Spleen (tissue), 13 donors: ENCODE measurements at regions of chr12 and their contacts with region 1.

Region 1: DNA sequence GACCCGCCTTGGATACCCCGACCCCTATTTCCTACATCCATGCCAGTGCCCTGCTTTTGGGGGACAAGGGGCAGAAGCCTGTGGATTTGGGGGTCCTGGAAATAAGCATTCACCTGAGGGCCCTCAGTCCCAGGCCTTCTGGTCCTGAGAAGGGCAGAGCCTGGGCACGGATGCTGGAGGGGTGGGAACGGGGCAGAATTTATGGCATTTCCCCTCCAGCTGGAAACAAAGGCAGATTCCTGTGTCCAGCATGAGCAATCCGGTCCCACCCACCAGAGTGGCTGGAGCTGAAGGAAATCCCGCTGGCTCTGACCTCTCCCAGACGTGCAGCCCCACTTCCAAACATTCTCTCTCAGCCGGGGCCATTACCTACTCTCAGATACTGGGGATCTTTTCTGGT is 9.3 kb downstream of the ANKRD33 start:
- DNase-seq: peak; percentile 66
- H3K4me3 ChIP-seq: no peak overlapping the region
- H3K27ac ChIP-seq: peak overlapping the region in 6 of 8 donors; percentile 4 to 65 (median 33)
- H3K4me1 ChIP-seq: peaks cover 0 to 49% (median 22%) of the 10 kb centered on the region in 6 donors
- H3K27me3 ChIP-seq: peaks cover 0 to 4% (median 0%) of the 10 kb centered on the region in 7 donors
- CTCF ChIP-seq: no peak
- POLR2A ChIP-seq: no peak

Region 2: GRCh38 chr12:51863933-51864832 is 33.0 kb before region 1 on chr12:
- intact Hi-C with region 1: no loop called
- DNase-seq: peak; percentile 69
- H3K4me3 ChIP-seq: peak overlapping the region; percentile 5 to 61 (median 18)
- H3K27ac ChIP-seq: no peak overlapping the region
- H3K4me1 ChIP-seq: peaks cover 12 to 33% (median 25%) of the 10 kb centered on the region in 6 donors
- H3K27me3 ChIP-seq: peaks cover 0 to 62% (median 23%) of the 10 kb centered on the region in 7 donors
- CTCF ChIP-seq: no peak
- POLR2A ChIP-seq: no peak

Region 3: DNA sequence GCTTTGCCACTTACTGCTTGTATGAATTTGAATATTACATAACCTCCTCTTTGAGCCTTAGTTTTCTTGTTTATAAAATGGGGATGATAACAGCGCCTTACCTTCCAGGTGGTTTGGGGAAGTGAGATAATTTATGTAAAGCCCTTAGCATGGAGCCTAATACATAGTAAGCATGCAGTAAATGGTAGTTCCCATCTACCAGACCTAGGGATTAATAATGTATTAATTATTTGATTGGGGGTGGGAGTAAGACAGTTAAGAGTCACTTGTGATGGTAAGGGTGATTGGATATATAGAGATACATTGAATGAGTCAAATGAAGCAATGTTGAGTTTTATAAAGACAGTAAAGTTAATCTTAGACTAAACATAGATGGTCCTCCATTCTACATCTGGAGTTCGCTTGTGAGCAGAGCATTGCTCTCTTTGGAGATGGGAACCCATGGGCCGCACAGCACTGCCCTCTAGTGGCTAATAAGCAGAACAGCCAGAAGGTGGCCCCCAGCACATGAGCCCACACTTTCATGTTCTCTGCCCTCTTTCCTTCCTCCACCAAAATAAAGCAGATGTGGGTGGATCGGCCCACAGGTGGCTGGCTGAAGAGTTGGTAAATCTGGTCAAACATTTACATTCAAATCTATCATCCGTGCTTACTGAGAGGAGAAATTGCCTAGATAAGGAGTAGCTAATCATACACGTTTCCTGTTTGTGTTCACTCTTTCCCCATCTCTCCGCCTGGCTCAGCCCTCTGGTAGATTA is 83.0 kb after region 1 on chr12:
- intact Hi-C with region 1: loop called (anchors 2 kb)
- DNase-seq: peak; percentile 92
- H3K4me3 ChIP-seq: no peak overlapping the region
- H3K27ac ChIP-seq: peak overlapping the region in 3 of 8 donors; percentile 12 to 55 (median 22)
- H3K4me1 ChIP-seq: peaks cover 5 to 50% (median 25%) of the 10 kb centered on the region in 6 donors
- H3K27me3 ChIP-seq: no peaks in the 10 kb centered on the region
- CTCF ChIP-seq: peak; percentile 92 to 99 (median 97)
- POLR2A ChIP-seq: no peak

Region 4: DNA sequence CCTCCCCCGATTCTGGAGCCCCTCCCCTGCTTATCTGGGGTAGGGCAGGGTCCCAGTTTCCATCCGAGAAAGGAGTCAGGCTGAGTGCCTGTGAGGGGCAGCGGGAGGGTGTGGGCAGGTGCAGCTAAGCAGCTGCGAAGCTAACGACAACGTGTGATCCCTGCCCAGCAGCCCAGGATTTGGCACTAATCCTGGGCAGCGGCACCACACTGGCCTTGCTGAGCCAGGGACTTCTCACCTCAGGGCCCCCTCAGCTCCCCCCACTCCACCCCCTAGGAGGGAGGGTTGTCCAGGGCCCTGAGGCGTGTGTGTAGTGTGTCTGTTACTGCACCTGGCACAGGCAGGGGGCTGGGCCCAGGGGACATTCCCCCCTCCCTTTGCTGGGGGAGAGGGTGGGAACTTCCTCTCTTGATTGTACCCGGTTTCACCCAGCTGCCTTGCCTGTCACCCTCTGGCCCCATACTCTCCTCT is 184.1 kb after region 1 on chr12:
- intact Hi-C with region 1: no loop called
- DNase-seq: peak; percentile 91
- H3K4me3 ChIP-seq: peak overlapping the region in 4 of 8 donors; percentile 6 to 58 (median 25)
- H3K27ac ChIP-seq: peak overlapping the region; percentile 70 to 88 (median 79)
- H3K4me1 ChIP-seq: peaks cover 28 to 57% (median 40%) of the 10 kb centered on the region in 6 donors
- H3K27me3 ChIP-seq: no peaks in the 10 kb centered on the region
- CTCF ChIP-seq: no peak
- POLR2A ChIP-seq: no peak